CD4-positive, alpha-beta memory T cell (primary cell): ENCODE measurements at regions of chr15 and their contacts with region 1.

Region 1: DNA sequence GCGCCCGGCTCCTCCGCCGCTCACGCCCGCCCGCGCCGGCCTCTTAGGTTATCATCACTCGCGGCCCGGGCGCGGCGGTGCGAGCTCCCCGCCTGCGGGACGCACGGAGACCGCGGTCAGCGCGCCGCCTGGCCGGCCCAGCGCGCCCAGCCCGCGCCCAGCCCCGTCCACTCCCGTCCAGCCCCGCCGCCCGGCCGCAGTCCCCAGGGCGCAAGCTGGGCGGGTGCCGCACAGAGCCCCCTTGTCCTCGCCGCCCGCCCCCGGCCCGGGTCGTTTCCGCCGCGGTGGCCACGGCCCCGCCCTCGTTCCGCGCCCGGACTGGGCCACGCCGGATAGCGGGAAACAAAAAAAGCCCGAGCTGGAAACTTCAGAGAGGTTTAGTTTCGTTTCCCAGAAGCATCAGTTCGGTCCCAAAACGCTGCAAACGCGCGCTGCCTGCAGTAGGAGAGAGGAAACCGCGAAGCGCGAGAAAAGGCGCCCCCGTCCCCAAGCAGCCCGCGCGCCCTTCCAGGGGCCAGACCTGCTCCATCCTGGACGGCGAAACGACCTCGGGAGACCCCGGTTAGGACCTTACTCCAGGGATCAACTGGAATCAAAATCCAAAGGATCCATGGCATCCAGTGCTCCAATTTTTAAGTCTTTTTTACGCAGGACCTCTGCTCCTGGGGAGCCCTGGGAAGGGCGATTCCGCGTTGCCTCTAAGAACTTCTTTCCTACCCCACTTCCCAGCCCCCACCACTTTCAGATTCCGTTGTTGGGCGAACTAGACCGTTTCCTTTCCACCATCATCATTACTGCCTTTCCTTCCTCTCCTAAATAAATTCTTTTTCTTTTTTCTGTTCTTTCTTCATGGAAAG is at the start of gene ATP10A:
- DNase-seq: peak; percentile 40 to 64 (median 43)
- H3K4me3 ChIP-seq: peak within 1 kb of the TSS; percentile 62 to 64
- H3K4me3 Mint-ChIP-seq: peak within 1 kb of the TSS; percentile 88 to 97 (median 94)
- H3K27ac ChIP-seq: peak within 1 kb of the TSS; percentile 63
- H3K27ac Mint-ChIP-seq: peak within 1 kb of the TSS; percentile 96 to 98 (median 97)
- H3K4me1 ChIP-seq: peaks cover 35% of the 10 kb centered on the region
- H3K4me1 Mint-ChIP-seq: peaks cover 25 to 42% (median 33%) of the 10 kb centered on the region in 4 donors
- H3K27me3 ChIP-seq: no peaks in the 10 kb centered on the region
- H3K27me3 Mint-ChIP-seq: no peaks in the 10 kb centered on the region
- total RNA-seq, gene ATP10A: 48.2 to 51.1 TPM

Region 2: GRCh38 chr15:24956111-24956838 is 907.1 kb before region 1 on chr15:
- CTCF ChIA-PET with region 1: no interaction called
- POLR2A ChIA-PET with region 1: interaction called, 3 read pairs
- intact Hi-C with region 1: loop called (anchors 10 kb)
- DNase-seq: peak; percentile 66 to 84 (median 71)
- H3K4me3 ChIP-seq: peak overlapping the region; percentile 7 to 77
- H3K4me3 Mint-ChIP-seq: peak overlapping the region; percentile 92 to 98 (median 96)
- H3K27ac ChIP-seq: peak overlapping the region; percentile 87
- H3K27ac Mint-ChIP-seq: peak overlapping the region; percentile 94 to 98 (median 97)
- H3K4me1 ChIP-seq: peaks cover 26% of the 10 kb centered on the region
- H3K4me1 Mint-ChIP-seq: peaks cover 5 to 37% (median 22%) of the 10 kb centered on the region in 4 donors
- H3K27me3 ChIP-seq: no peaks in the 10 kb centered on the region
- H3K27me3 Mint-ChIP-seq: peaks cover 0 to 2% of the 10 kb centered on the region in 2 donors

Region 3: GRCh38 chr15:25739687-25740121 is 123.6 kb before region 1 on chr15:
- CTCF ChIA-PET with region 1: no interaction called
- POLR2A ChIA-PET with region 1: no interaction called
- intact Hi-C with region 1: loop called (anchors 10 kb)
- DNase-seq: peak in 4 of 5 donors; percentile 18 to 29 (median 28)
- H3K4me3 ChIP-seq: no peak overlapping the region
- H3K4me3 Mint-ChIP-seq: no peak overlapping the region
- H3K27ac ChIP-seq: no peak overlapping the region
- H3K27ac Mint-ChIP-seq: peak overlapping the region in 1 of 7 donors; percentile 49
- H3K4me1 ChIP-seq: peaks cover 6% of the 10 kb centered on the region
- H3K4me1 Mint-ChIP-seq: peaks cover 13 to 34% (median 18%) of the 10 kb centered on the region in 4 donors
- H3K27me3 ChIP-seq: no peaks in the 10 kb centered on the region
- H3K27me3 Mint-ChIP-seq: no peaks in the 10 kb centered on the region

Region 4: GRCh38 chr15:25811481-25811906 is 51.8 kb before region 1 on chr15:
- CTCF ChIA-PET with region 1: interaction called, 4 read pairs
- POLR2A ChIA-PET with region 1: interaction called, 62 read pairs
- intact Hi-C with region 1: loop called (anchors 2 kb)
- DNase-seq: peak in 4 of 5 donors; percentile 8 to 44 (median 15)
- H3K4me3 ChIP-seq: peak overlapping the region in 1 of 2 donors; percentile 18
- H3K4me3 Mint-ChIP-seq: peak overlapping the region; percentile 63 to 86 (median 71)
- H3K27ac ChIP-seq: no peak overlapping the region
- H3K27ac Mint-ChIP-seq: peak overlapping the region; percentile 60 to 93 (median 83)
- H3K4me1 ChIP-seq: peaks cover 49% of the 10 kb centered on the region
- H3K4me1 Mint-ChIP-seq: peaks cover 42 to 73% (median 60%) of the 10 kb centered on the region in 4 donors
- H3K27me3 ChIP-seq: no peaks in the 10 kb centered on the region
- H3K27me3 Mint-ChIP-seq: no peaks in the 10 kb centered on the region

Region 5: GRCh38 chr15:25830844-25831451 is 32.4 kb before region 1 on chr15:
- CTCF ChIA-PET with region 1: no interaction called
- POLR2A ChIA-PET with region 1: no interaction called
- intact Hi-C with region 1: no loop called
- DNase-seq: no peak
- H3K4me3 ChIP-seq: no peak overlapping the region
- H3K4me3 Mint-ChIP-seq: no peak overlapping the region
- H3K27ac ChIP-seq: no peak overlapping the region
- H3K27ac Mint-ChIP-seq: peak overlapping the region in 1 of 7 donors; percentile 36
- H3K4me1 ChIP-seq: no peaks in the 10 kb centered on the region
- H3K4me1 Mint-ChIP-seq: peaks cover 8 to 44% (median 24%) of the 10 kb centered on the region in 4 donors
- H3K27me3 ChIP-seq: no peaks in the 10 kb centered on the region
- H3K27me3 Mint-ChIP-seq: no peaks in the 10 kb centered on the region

Region 6: GRCh38 chr15:25850154-25851111 is 12.9 kb before region 1 on chr15:
- CTCF ChIA-PET with region 1: interaction called, 41 read pairs
- POLR2A ChIA-PET with region 1: interaction called, 180 read pairs
- intact Hi-C with region 1: loop called (anchors 1 kb)
- DNase-seq: peak; percentile 60 to 82 (median 69)
- H3K4me3 ChIP-seq: peak overlapping the region; percentile 58 to 69
- H3K4me3 Mint-ChIP-seq: peak overlapping the region; percentile 91 to 98 (median 96)
- H3K27ac ChIP-seq: peak overlapping the region; percentile 82
- H3K27ac Mint-ChIP-seq: peak overlapping the region; percentile 96 to 99 (median 98)
- H3K4me1 ChIP-seq: peaks cover 84% of the 10 kb centered on the region
- H3K4me1 Mint-ChIP-seq: peaks cover 68 to 94% (median 81%) of the 10 kb centered on the region in 4 donors
- H3K27me3 ChIP-seq: no peaks in the 10 kb centered on the region
- H3K27me3 Mint-ChIP-seq: no peaks in the 10 kb centered on the region

Region 7: GRCh38 chr15:26082221-26083109 is 219.1 kb after region 1 on chr15:
- CTCF ChIA-PET with region 1: no interaction called
- POLR2A ChIA-PET with region 1: no interaction called
- intact Hi-C with region 1: loop called (anchors 5 kb)
- DNase-seq: peak; percentile 92 to 96 (median 95)
- H3K4me3 ChIP-seq: peak overlapping the region; percentile 53 to 68
- H3K4me3 Mint-ChIP-seq: peak overlapping the region; percentile 86 to 95 (median 90)
- H3K27ac ChIP-seq: peak overlapping the region; percentile 62
- H3K27ac Mint-ChIP-seq: peak overlapping the region; percentile 94 to 100 (median 97)
- H3K4me1 ChIP-seq: peaks cover 19% of the 10 kb centered on the region
- H3K4me1 Mint-ChIP-seq: peaks cover 25 to 49% (median 41%) of the 10 kb centered on the region in 4 donors
- H3K27me3 ChIP-seq: no peaks in the 10 kb centered on the region
- H3K27me3 Mint-ChIP-seq: peaks cover 0 to 3% of the 10 kb centered on the region in 2 donors